Naive thymus-derived CD4-positive, alpha-beta T cell (primary cell): ENCODE measurements at regions of chr12 and their contacts with region 1.

Region 1: GRCh38 chr12:52879394-52880351 is 25.2 kb downstream of the KRT8 start:
- DNase-seq: peak; percentile 67 to 84 (median 79)
- ATAC-seq: peak; percentile 99
- H3K4me3 ChIP-seq: peak overlapping the region; percentile 48
- H3K4me3 Mint-ChIP-seq: peak overlapping the region; percentile 51 to 85 (median 76)
- H3K27ac ChIP-seq: no peak overlapping the region
- H3K27ac Mint-ChIP-seq: peak overlapping the region in 6 of 9 donors; percentile 5 to 54 (median 32)
- H3K4me1 ChIP-seq: peaks cover 5 to 6% of the 10 kb centered on the region in 2 donors
- H3K4me1 Mint-ChIP-seq: peaks cover 3 to 13% (median 11%) of the 10 kb centered on the region in 7 donors
- H3K27me3 ChIP-seq: peaks cover 0 to 3% of the 10 kb centered on the region in 2 donors
- H3K27me3 Mint-ChIP-seq: peaks cover 0 to 21% (median 8%) of the 10 kb centered on the region in 5 donors

Region 2: GRCh38 chr12:52327052-52327829 is 552.4 kb before region 1 on chr12:
- CTCF ChIA-PET with region 1: interaction called, 24 read pairs
- POLR2A ChIA-PET with region 1: no interaction called
- intact Hi-C with region 1: no loop called
- DNase-seq: peak; percentile 42 to 81 (median 72)
- ATAC-seq: peak; percentile 97
- H3K4me3 ChIP-seq: no peak overlapping the region
- H3K4me3 Mint-ChIP-seq: no peak overlapping the region
- H3K27ac ChIP-seq: no peak overlapping the region
- H3K27ac Mint-ChIP-seq: peak overlapping the region in 1 of 9 donors; percentile 1
- H3K4me1 ChIP-seq: peaks cover 0 to 6% of the 10 kb centered on the region in 2 donors
- H3K4me1 Mint-ChIP-seq: peaks cover 0 to 13% (median 6%) of the 10 kb centered on the region in 7 donors
- H3K27me3 ChIP-seq: no peaks in the 10 kb centered on the region
- H3K27me3 Mint-ChIP-seq: peaks cover 1 to 32% (median 19%) of the 10 kb centered on the region in 5 donors

Region 3: GRCh38 chr12:52390739-52391617 is 488.7 kb before region 1 on chr12:
- CTCF ChIA-PET with region 1: interaction called, 7 read pairs
- POLR2A ChIA-PET with region 1: no interaction called
- intact Hi-C with region 1: loop called in 1 of 2 experiments (anchors 5 kb)
- DNase-seq: peak in 1 of 9 donors; percentile 8
- ATAC-seq: no peak
- H3K4me3 ChIP-seq: no peak overlapping the region
- H3K4me3 Mint-ChIP-seq: no peak overlapping the region
- H3K27ac ChIP-seq: no peak overlapping the region
- H3K27ac Mint-ChIP-seq: no peak overlapping the region
- H3K4me1 ChIP-seq: no peaks in the 10 kb centered on the region
- H3K4me1 Mint-ChIP-seq: peaks cover 0 to 1% (median 0%) of the 10 kb centered on the region in 7 donors
- H3K27me3 ChIP-seq: no peaks in the 10 kb centered on the region
- H3K27me3 Mint-ChIP-seq: peaks cover 0 to 4% (median 0%) of the 10 kb centered on the region in 5 donors

Region 4: DNA sequence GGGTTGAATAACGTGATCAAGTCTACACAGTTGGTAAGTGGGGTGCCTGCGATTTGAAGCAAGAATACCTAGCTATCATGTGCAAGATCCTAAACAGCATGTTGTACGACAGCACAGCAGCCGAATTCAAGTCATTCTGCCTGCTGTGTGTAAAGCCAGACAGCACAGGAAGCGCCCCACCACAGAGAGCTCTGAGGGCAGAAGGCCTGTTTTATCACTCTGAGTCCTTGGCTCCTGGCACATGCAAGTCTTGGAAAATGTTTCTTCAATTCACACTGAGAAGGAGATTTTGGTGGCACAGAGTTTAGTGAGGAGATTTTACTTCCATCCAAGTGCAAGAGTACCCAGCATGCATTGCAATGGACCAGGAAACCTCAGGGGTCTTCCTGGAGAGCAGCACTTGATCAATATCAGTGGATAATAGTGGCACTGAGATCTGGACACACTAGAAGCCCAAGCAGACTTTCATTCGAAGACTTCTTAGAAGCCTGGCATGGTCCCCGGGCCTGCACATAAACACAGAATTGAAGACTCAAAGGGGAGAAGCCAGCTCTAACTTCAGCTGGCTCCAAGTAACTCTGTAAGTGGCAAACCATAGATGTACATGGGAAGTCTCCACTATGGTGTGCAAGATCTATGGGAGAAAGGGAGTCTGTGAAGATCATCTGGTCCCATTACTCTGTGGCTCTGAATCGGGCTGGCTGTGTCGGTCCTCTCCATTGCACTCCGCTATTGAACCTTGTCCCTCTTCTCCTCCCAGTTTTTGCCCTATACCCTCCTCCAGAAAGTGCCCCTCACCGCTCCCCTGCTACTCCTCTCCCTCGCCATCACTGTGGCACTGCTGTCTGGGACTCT is 197.9 kb before region 1 on chr12:
- CTCF ChIA-PET with region 1: interaction called, 11 read pairs
- POLR2A ChIA-PET with region 1: no interaction called
- intact Hi-C with region 1: no loop called
- DNase-seq: peak in 7 of 9 donors; percentile 60 to 74 (median 67)
- ATAC-seq: peak; percentile 90
- H3K4me3 ChIP-seq: no peak overlapping the region
- H3K4me3 Mint-ChIP-seq: peak overlapping the region in 9 of 10 donors; percentile 2 to 76 (median 48)
- H3K27ac ChIP-seq: peak overlapping the region; percentile 42
- H3K27ac Mint-ChIP-seq: peak overlapping the region in 8 of 9 donors; percentile 78 to 93 (median 86)
- H3K4me1 ChIP-seq: peaks cover 6 to 24% of the 10 kb centered on the region in 2 donors
- H3K4me1 Mint-ChIP-seq: peaks cover 16 to 76% (median 66%) of the 10 kb centered on the region in 7 donors
- H3K27me3 ChIP-seq: peaks cover 0 to 4% of the 10 kb centered on the region in 2 donors
- H3K27me3 Mint-ChIP-seq: peaks cover 0 to 35% (median 0%) of the 10 kb centered on the region in 5 donors